Dorsolateral prefrontal cortex (tissue), 120 donors: ENCODE measurements at regions of chr15 and their contacts with region 1.

Region 1: DNA sequence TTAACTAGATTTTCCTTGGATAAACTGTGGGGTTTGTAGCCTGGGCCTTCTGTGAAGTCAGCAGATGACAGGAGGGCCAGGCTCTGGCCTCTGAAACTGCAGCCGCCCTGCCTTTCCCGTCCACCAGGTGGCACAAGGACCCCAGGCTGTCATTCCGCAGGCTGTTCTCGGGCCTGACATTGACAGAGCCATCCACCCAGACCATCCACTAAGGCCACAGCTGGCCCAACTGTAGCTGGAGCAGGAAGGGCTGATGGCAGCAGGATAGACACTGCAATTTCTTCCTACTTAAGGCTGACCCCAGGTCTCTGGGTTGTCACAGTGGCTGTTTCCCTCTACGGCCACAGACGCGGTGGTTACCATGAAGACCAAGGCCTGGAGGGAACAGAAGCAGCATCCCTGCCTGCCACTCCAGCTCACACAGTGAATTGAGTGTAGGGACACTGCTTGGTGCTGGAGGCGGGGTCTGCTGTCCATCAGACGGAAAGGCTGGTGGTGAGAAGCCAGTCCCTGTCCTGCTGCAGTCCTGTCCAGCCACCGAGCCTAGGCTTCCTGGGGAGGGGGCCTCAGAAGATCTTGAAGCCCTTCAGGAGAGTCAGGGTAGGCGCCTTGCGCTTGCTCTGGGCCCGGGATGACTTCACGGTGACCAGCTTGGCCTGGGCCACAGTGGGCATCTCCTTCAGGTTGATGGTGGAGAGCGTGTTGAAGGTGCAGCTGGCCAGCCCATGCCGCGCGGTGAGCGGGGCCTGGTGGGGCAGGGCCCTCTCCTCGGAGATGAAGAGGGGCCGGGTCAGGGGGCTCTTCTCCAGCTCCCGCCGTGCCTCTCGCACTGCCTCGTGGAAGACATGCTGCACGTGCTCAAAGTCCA is 9.4 kb downstream of the SLC51B start:
- DNase-seq: peak; percentile 60 to 85 (median 76)
- H3K4me3 ChIP-seq: no peak overlapping the region
- H3K27ac ChIP-seq: peak overlapping the region in 26 of 59 donors; percentile 2 to 68 (median 35)
- H3K27me3 ChIP-seq: peaks cover 0 to under 1% (median 0%) of the 10 kb centered on the region in 45 donors
- CTCF ChIP-seq: peak; percentile 45 to 96 (median 87)

Region 2: GRCh38 chr15:64710664-64711428 is 343.7 kb before region 1 on chr15:
- intact Hi-C with region 1: no loop called
- DNase-seq: peak in 2 of 10 donors; percentile 43 to 47
- H3K4me3 ChIP-seq: no peak overlapping the region
- H3K27ac ChIP-seq: peak overlapping the region in 12 of 59 donors; percentile 1 to 63 (median 24)
- H3K27me3 ChIP-seq: no peaks in the 10 kb centered on the region
- CTCF ChIP-seq: no peak

Region 3: GRCh38 chr15:65077981-65078352 is 23.4 kb after region 1 on chr15:
- intact Hi-C with region 1: loop called (anchors 2 kb)
- DNase-seq: peak in 1 of 10 donors; percentile 49
- H3K4me3 ChIP-seq: peak overlapping the region in 7 of 59 donors; percentile 9 to 30 (median 13)
- H3K27ac ChIP-seq: no peak overlapping the region
- H3K27me3 ChIP-seq: peaks cover 0 to 34% (median 18%) of the 10 kb centered on the region in 45 donors
- CTCF ChIP-seq: peak in 51 of 56 donors; percentile 12 to 63 (median 47)

Region 4: GRCh38 chr15:65086017-65086679 is 31.6 kb after region 1 on chr15:
- intact Hi-C with region 1: loop called (anchors 2 kb)
- DNase-seq: peak in 1 of 10 donors; percentile 23
- H3K4me3 ChIP-seq: no peak overlapping the region
- H3K27ac ChIP-seq: peak overlapping the region in 11 of 59 donors; percentile 1 to 67 (median 34)
- H3K27me3 ChIP-seq: peaks cover 0 to 9% (median 0%) of the 10 kb centered on the region in 45 donors
- CTCF ChIP-seq: peak in 30 of 56 donors; percentile 7 to 43 (median 24)

Region 5: GRCh38 chr15:65101411-65101890 is 46.9 kb after region 1 on chr15:
- intact Hi-C with region 1: loop called in 1 of 2 experiments (anchors 5 kb)
- DNase-seq: peak in 9 of 10 donors; percentile 44 to 81 (median 68)
- H3K4me3 ChIP-seq: peak overlapping the region in 3 of 59 donors; percentile 8 to 37 (median 16)
- H3K27ac ChIP-seq: peak overlapping the region in 2 of 59 donors; percentile 3 to 28
- H3K27me3 ChIP-seq: no peaks in the 10 kb centered on the region
- CTCF ChIP-seq: peak; percentile 54 to 87 (median 74)

Region 6: GRCh38 chr15:65275728-65276126 is 221.2 kb after region 1 on chr15:
- intact Hi-C with region 1: loop called in 1 of 2 experiments (anchors 10 kb)
- DNase-seq: no peak
- H3K4me3 ChIP-seq: no peak overlapping the region
- H3K27ac ChIP-seq: no peak overlapping the region
- H3K27me3 ChIP-seq: no peaks in the 10 kb centered on the region
- CTCF ChIP-seq: no peak